ENCODE measurements at regions of chr2 and their contacts with region 1.

Region 1: DNA sequence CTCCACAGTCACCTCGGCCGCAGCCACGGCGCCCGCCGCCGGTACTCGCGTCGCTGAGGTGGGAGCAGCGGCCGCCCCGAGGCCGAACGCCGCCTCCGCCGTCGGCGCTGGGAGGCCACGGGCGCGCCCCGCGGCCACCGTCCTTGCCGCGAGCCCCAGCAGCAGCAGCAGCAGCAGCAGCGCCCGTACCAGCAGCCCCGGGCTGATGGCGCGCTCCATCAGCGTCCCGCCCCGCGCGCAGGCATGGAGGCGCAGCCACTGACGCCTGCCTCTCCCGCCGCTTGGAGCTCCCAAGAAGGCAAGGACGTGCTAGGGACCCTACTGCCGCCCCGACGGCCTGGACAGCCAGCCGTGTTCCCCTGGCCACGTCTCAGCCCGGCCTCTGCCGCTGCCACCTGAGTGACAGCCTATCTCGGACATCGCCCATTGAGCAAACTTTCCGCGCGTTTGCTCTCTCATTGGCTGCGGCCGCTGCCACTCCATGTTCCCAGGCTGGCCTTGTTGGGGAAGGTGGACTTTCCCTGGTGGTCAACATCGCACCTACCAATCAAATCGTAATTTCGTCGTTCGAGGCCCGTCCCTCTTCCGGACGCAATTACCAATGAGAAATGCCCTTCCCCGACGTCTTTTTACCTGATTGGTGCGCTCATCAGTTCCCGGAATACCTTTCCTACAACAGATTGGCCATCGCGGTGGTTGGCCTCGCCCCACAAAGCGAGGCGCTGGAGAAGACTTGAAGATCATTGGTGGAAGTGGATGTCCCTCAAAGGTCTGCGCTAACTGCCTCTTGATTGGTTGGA is at the start of gene EIF2AK3:
- DNase-seq: peak; percentile 96
- H3K4me3 Mint-ChIP-seq: peak within 1 kb of the TSS; percentile 94
- H3K27ac Mint-ChIP-seq: peak within 1 kb of the TSS; percentile 88
- H3K4me1 Mint-ChIP-seq: peaks cover 5% of the 10 kb centered on the region
- H3K27me3 Mint-ChIP-seq: no peaks in the 10 kb centered on the region
- total RNA-seq, gene EIF2AK3: 28.7 and 29.6 TPM in 2 replicates

Region 2: GRCh38 chr2:88590998-88591613 is 36.1 kb before region 1 on chr2:
- intact Hi-C with region 1: loop called (anchors 5 kb)
- DNase-seq: peak; percentile 19
- H3K4me3 Mint-ChIP-seq: no peak overlapping the region
- H3K27ac Mint-ChIP-seq: no peak overlapping the region
- H3K4me1 Mint-ChIP-seq: no peaks in the 10 kb centered on the region
- H3K27me3 Mint-ChIP-seq: no peaks in the 10 kb centered on the region

Region 3: GRCh38 chr2:88638743-88639142 is 11.5 kb after region 1 on chr2:
- intact Hi-C with region 1: loop called (anchors 1 kb)
- DNase-seq: peak; percentile 19
- H3K4me3 Mint-ChIP-seq: no peak overlapping the region
- H3K27ac Mint-ChIP-seq: peak overlapping the region; percentile 82
- H3K4me1 Mint-ChIP-seq: peaks cover 65% of the 10 kb centered on the region
- H3K27me3 Mint-ChIP-seq: no peaks in the 10 kb centered on the region

Measured in activated T-helper 1 cell treated with anti-CD3 and anti-CD28 coated beads, Interleukin-12 subunit alpha, Interleukin-12 subunit beta, Interleukin-2, Interleukin-4 antibody, amounts not matched to agents 30 ng/mL and 10 ng/mL and 1 ng/mL, durations not matched to agents 14 hours and 24 hours and 36 hours (primary cell).